ENCODE measurements at regions of chr13 and their contacts with region 1.

Region 1: GRCh38 chr13:96817336-96817941 is 176.8 kb downstream of the OXGR1 start:
- DNase-seq: no peak
- ATAC-seq: no peak
- H3K4me3 ChIP-seq: no peak overlapping the region
- H3K27ac ChIP-seq: no peak overlapping the region
- H3K4me1 ChIP-seq: peaks cover 0 to 2% (median 0%) of the 10 kb centered on the region in 12 donors
- H3K27me3 ChIP-seq: peaks cover 0 to 3% (median 0%) of the 10 kb centered on the region in 9 donors
- CTCF ChIP-seq: peak; percentile 24 to 61 (median 42)
- POLR2A ChIP-seq: no peak

Region 2: GRCh38 chr13:96141027-96141426 is 676.4 kb before region 1 on chr13:
- intact Hi-C with region 1: loop called in 4 of 10 experiments (anchors 5 to 10 kb)
- DNase-seq: no peak
- ATAC-seq: no peak
- H3K4me3 ChIP-seq: no peak overlapping the region
- H3K27ac ChIP-seq: no peak overlapping the region
- H3K4me1 ChIP-seq: no peaks in the 10 kb centered on the region
- H3K27me3 ChIP-seq: no peaks in the 10 kb centered on the region
- CTCF ChIP-seq: peak in 5 of 12 donors; percentile 20 to 37 (median 30)
- POLR2A ChIP-seq: no peak

Region 3: DNA sequence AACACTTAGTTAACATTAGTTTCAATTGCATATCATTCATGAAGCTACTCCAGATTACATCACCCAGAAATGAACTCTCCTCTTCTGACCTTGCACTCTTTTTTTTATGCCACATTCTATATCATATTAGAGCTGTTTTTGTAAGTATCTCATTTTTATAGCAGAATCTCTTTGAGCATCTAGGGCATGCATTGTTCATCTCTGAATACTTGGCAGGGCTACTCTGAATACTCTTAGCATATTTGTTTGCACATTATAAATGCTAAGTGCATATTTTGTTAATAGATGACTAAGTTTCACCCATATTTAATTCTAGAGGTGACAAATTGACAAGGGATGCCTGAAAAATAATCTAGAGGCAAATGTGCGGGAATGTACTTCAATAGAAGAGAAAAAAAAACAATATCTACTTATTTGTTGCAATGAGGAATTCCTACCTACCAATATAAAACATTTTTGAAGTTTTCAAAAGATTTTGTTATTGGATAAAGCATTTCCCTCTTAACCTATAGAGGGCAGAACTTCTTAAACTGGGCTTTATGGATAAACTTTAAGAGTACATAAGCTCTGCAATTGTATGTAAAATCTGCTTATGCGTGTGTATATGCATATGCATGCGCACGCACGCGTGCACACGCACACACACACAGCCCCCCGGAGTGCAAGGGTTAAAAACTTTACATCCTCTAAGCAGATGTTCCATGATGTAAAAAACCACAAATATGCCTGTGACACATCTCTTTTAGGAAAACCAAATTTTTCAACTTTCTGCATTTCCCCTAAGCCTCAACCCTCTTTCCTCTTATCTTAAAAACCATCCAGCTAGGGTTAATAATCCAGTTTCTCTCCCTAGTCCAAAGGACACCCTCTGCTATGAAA is 249.8 kb after region 1 on chr13:
- intact Hi-C with region 1: no loop called
- DNase-seq: no peak
- ATAC-seq: no peak
- H3K4me3 ChIP-seq: no peak overlapping the region
- H3K27ac ChIP-seq: no peak overlapping the region
- H3K4me1 ChIP-seq: no peaks in the 10 kb centered on the region
- H3K27me3 ChIP-seq: no peaks in the 10 kb centered on the region
- CTCF ChIP-seq: no peak
- POLR2A ChIP-seq: no peak

Region 4: GRCh38 chr13:97174638-97175037 is 357.2 kb after region 1 on chr13:
- intact Hi-C with region 1: no loop called
- DNase-seq: no peak
- ATAC-seq: no peak
- H3K4me3 ChIP-seq: no peak overlapping the region
- H3K27ac ChIP-seq: no peak overlapping the region
- H3K4me1 ChIP-seq: no peaks in the 10 kb centered on the region
- H3K27me3 ChIP-seq: no peaks in the 10 kb centered on the region
- CTCF ChIP-seq: no peak
- POLR2A ChIP-seq: no peak

Measured in heart left ventricle (tissue), 16 donors.